ENCODE measurements at regions of chr12 and their contacts with region 1.

Region 1: GRCh38 chr12:20646239-20646827 is 48.8 kb upstream of the SLCO1C1 start:
- DNase-seq: no peak
- H3K4me3 ChIP-seq: peak overlapping the region in 1 of 59 donors; percentile 20
- H3K27ac ChIP-seq: no peak overlapping the region
- H3K27me3 ChIP-seq: no peaks in the 10 kb centered on the region
- CTCF ChIP-seq: peak; percentile 48 to 83 (median 68)

Region 2: GRCh38 chr12:20716037-20716436 is 69.7 kb after region 1 on chr12:
- intact Hi-C with region 1: no loop called
- DNase-seq: no peak
- H3K4me3 ChIP-seq: no peak overlapping the region
- H3K27ac ChIP-seq: no peak overlapping the region
- H3K27me3 ChIP-seq: no peaks in the 10 kb centered on the region
- CTCF ChIP-seq: no peak

Region 3: DNA sequence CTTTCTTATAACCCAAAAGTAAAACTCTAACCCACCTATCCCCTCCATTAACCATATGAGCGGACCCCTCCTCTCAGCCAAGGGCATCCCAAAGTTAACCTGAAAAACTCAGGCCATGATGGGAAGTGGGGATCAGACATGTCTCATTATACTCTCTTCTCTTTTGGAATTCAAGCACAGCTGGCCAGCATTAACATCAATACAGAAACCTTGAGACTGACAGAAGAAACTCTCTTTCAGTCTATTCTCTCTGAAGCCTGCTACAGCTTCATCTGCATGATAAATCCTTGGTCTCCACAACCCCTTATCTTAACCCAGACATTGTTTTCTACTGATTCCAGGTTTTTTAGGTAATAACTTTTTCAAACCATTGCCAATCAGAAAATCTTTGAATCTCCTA is 146.6 kb after region 1 on chr12:
- intact Hi-C with region 1: loop called in 1 of 2 experiments (anchors 5 kb)
- DNase-seq: no peak
- H3K4me3 ChIP-seq: no peak overlapping the region
- H3K27ac ChIP-seq: no peak overlapping the region
- H3K27me3 ChIP-seq: peaks cover 0 to 5% (median 0%) of the 10 kb centered on the region in 45 donors
- CTCF ChIP-seq: no peak